ENCODE measurements at regions of chr14 and their contacts with region 1.

Region 1: DNA sequence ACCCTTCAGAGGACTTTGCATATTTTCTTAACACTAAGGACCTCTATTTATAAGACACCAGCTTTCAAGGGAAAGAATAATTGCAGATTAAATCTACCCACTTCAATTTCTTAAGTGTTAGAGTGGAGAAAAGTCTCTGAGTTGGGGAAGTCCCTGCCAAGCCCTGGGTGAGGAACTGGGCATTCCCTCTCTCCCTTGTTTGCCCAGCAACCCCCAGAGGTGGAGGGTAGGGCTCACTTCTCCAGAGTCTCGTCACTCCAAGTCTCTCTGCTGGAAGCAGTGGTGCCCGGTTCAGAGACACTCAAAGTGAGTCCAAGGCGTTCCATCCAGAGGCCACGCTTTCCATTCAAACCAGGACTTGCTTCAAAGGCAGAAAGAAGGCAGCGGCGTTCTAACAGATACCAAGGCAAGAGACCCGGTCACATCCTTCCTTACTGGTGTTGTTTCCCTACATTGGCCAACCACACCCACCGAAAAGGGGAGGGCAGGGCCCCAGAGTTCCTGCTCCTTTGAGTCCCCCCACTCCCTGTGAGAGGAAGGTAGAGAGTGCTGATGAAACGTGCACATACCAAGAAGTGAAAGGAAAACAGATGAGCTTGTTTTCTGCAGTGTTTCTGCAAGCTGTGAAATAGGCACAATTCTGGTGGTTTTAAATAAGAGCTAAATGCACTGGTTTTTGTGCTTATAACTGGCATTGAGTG is 6.1 kb upstream of the BDKRB2 start:
- DNase-seq: peak; percentile 34
- H3K4me3 Mint-ChIP-seq: peak overlapping the region; percentile 52
- H3K27ac Mint-ChIP-seq: peak overlapping the region; percentile 23
- H3K4me1 Mint-ChIP-seq: peaks cover 16% of the 10 kb centered on the region
- H3K27me3 Mint-ChIP-seq: peaks cover 9% of the 10 kb centered on the region

Region 2: GRCh38 chr14:95248432-95248831 is 950.1 kb before region 1 on chr14:
- CTCF ChIA-PET with region 1: no interaction called
- POLR2A ChIA-PET with region 1: no interaction called
- intact Hi-C with region 1: loop called (anchors 10 kb)
- DNase-seq: no peak
- H3K4me3 Mint-ChIP-seq: no peak overlapping the region
- H3K27ac Mint-ChIP-seq: no peak overlapping the region
- H3K4me1 Mint-ChIP-seq: no peaks in the 10 kb centered on the region
- H3K27me3 Mint-ChIP-seq: peaks cover 10% of the 10 kb centered on the region

Region 3: GRCh38 chr14:96225745-96226151 is 27.2 kb after region 1 on chr14:
- CTCF ChIA-PET with region 1: no interaction called
- POLR2A ChIA-PET with region 1: no interaction called
- intact Hi-C with region 1: no loop called
- DNase-seq: no peak
- H3K4me3 Mint-ChIP-seq: no peak overlapping the region
- H3K27ac Mint-ChIP-seq: no peak overlapping the region
- H3K4me1 Mint-ChIP-seq: no peaks in the 10 kb centered on the region
- H3K27me3 Mint-ChIP-seq: peaks cover 3% of the 10 kb centered on the region

Region 4: DNA sequence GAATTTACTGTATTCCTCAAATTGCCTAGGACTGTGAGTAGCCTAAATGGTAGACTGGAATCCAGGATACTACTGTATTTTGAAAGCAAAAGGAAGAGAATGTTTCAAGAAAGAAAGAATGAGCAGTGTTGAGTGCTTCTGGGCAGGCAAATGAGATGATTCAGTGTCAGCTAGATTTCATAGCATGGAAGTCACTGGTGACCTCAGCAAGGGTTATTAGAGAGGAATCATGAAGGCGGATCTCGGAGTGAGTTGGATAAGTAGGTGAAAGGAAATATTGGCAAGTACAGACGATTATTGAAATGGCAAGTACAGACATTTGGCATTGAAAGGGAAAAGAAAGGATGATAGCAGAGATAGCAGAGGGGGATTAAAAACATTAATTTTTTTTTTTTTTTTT is 625.7 kb after region 1 on chr14:
- CTCF ChIA-PET with region 1: no interaction called
- POLR2A ChIA-PET with region 1: no interaction called
- intact Hi-C with region 1: no loop called
- DNase-seq: no peak
- H3K4me3 Mint-ChIP-seq: no peak overlapping the region
- H3K27ac Mint-ChIP-seq: no peak overlapping the region
- H3K4me1 Mint-ChIP-seq: peaks cover 13% of the 10 kb centered on the region
- H3K27me3 Mint-ChIP-seq: no peaks in the 10 kb centered on the region